ENCODE measurements at regions of chr1 and their contacts with region 1.

Region 1: DNA sequence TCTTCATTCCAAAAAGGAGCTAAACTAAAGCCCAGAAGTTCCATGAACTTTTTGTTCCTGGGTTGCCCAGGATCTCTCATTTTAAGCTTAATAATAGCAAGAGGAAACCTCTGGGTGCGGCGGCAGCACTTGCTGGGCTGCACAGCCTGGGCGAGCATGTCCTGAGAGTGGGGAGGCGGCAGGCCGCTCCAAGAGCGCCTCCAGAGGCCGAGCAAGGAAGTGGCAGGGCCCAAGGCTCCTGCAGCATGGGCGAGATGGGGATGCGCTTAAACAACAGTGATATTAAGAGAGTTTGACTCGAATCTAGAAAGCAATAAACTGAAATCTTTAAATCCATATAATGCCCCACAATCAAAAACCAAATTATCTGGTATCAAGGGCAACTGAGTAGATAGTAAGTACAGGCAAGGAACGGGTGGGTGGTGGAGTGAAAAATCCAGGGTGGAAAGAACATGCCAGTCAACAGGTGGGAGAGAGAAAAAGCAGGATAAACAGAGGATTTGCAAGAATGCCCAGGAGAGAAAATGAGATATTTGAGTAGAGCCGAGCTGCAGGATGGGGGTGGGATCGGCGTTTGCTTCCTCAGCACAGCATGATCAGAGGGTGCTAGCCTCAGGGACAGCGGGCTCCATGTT is 14.1 kb upstream of the TNR start:
- H3K4me3 ChIP-seq: no peak overlapping the region
- H3K27ac ChIP-seq: no peak overlapping the region
- H3K4me1 ChIP-seq: no peaks in the 10 kb centered on the region
- CTCF ChIP-seq: peak; percentile 41; the same call in 1 of the 2 replicates

Region 2: GRCh38 chr1:175373786-175374623 is 383.5 kb before region 1 on chr1:
- CTCF ChIA-PET with region 1: interaction called, 10 read pairs
- POLR2A ChIA-PET with region 1: no interaction called
- H3K4me3 ChIP-seq: no peak overlapping the region
- H3K27ac ChIP-seq: no peak overlapping the region
- H3K4me1 ChIP-seq: no peaks in the 10 kb centered on the region
- CTCF ChIP-seq: peak; percentile 74

Region 3: DNA sequence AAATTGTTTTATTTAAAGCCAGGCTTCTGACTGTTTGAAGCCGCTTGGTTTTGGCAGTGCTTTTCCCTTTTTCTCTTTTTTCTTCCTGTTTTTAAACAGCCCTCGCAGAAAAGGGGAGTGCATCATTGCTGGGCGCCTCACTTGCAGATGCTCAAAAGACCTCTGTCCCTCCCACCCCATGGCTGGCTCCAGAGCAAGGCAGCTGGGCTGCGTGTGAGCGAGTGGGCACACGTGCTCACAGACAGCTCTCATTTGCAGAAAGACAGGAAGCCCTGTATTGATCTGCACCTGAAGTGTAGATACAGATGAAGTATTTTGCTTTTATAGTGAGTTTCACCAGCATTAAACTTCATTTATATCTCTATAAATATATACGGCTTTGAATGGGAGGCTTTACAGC is 22.9 kb before region 1 on chr1:
- CTCF ChIA-PET with region 1: interaction called, 10 read pairs
- POLR2A ChIA-PET with region 1: no interaction called
- H3K4me3 ChIP-seq: no peak overlapping the region
- H3K27ac ChIP-seq: no peak overlapping the region
- H3K4me1 ChIP-seq: no peaks in the 10 kb centered on the region
- CTCF ChIP-seq: no peak

Region 4: GRCh38 chr1:175742790-175743459 is 14.6 kb before region 1 on chr1:
- CTCF ChIA-PET with region 1: interaction called, 32 read pairs
- POLR2A ChIA-PET with region 1: no interaction called
- H3K4me3 ChIP-seq: no peak overlapping the region
- H3K27ac ChIP-seq: no peak overlapping the region
- H3K4me1 ChIP-seq: no peaks in the 10 kb centered on the region
- CTCF ChIP-seq: no peak

Region 5: GRCh38 chr1:175768610-175769009 is 11.1 kb after region 1 on chr1:
- CTCF ChIA-PET with region 1: interaction called, 19 read pairs
- POLR2A ChIA-PET with region 1: no interaction called
- H3K4me3 ChIP-seq: no peak overlapping the region
- H3K27ac ChIP-seq: no peak overlapping the region
- H3K4me1 ChIP-seq: no peaks in the 10 kb centered on the region
- CTCF ChIP-seq: no peak